Kidney (tissue), 22 donors: ENCODE measurements at regions of chr22 and their contacts with region 1.

Region 1: DNA sequence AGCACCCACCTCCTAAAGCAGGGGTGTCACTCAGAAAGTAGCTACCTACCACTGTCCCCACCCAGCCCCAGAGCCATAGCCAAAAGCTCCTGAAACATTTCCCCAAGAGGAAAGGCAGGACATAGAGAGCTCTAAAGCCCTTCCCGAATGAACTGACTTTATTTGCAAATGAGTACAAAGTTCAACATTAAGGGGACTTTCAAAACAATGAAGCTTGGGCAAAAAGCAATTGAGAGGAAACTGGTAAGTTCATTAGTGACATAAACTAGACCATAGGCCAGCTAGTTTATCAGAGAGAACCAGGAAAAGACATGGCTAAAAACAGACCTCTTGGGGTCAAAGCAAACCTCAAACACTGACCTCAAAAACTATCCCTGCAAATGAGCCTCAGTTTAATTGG is 72.7 kb downstream of the IGLL5 start:
- DNase-seq: no peak
- H3K4me3 ChIP-seq: no peak overlapping the region
- H3K27ac ChIP-seq: no peak overlapping the region
- H3K4me1 ChIP-seq: no peaks in the 10 kb centered on the region
- H3K27me3 ChIP-seq: no peaks in the 10 kb centered on the region
- CTCF ChIP-seq: no peak

Region 2: GRCh38 chr22:23128269-23129108 is 168.2 kb after region 1 on chr22:
- intact Hi-C with region 1: loop called (anchors 10 kb)
- DNase-seq: peak in 4 of 5 donors; percentile 81 to 88 (median 86)
- H3K4me3 ChIP-seq: no peak overlapping the region
- H3K27ac ChIP-seq: no peak overlapping the region
- H3K4me1 ChIP-seq: peaks cover 0 to 4% (median 0%) of the 10 kb centered on the region in 3 donors
- H3K27me3 ChIP-seq: no peaks in the 10 kb centered on the region
- CTCF ChIP-seq: peak; percentile 82